Activated CD8-positive, alpha-beta T cell treated with anti-CD3 and anti-CD28 coated beads, Interleukin-2, amount 10 ng/mL, durations not matched to agents 7 days and 5 days (primary cell): ENCODE measurements at regions of chr12 and their contacts with region 1.

Region 1: GRCh38 chr12:92145731-92146496 is at the start of gene BTG1:
- DNase-seq: peak; percentile 99
- ATAC-seq: peak; percentile 73
- H3K4me3 Mint-ChIP-seq: peak within 1 kb of the TSS; percentile 100
- H3K27ac Mint-ChIP-seq: peak within 1 kb of the TSS; percentile 99
- H3K4me1 Mint-ChIP-seq: peaks cover 20% of the 10 kb centered on the region
- H3K27me3 Mint-ChIP-seq: no peaks in the 10 kb centered on the region
- total RNA-seq, gene BTG1: 113 to 118 TPM

Region 2: DNA sequence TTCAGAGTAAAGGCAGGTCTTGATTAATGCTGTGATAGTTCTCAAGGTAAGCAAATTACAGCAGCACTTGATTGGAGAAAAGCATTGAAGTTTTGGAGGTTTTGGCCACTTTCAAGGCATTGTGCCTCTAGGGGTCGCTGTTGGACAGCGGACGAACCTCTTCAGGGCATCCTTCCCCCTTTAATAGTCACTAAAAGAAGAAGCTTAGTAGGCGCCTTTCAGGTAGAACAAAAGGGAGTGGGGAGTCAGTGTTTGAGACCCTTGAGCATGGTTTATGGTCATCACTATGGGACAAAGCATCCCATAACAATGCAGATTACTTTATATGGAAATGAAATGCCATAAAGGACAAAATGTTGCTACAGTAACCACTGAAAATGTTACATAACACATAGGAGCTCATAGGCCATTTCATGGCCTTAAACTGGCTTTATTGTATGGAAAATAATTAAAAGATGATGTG is 763.8 kb before region 1 on chr12:
- CTCF ChIA-PET with region 1: interaction called, 20 read pairs
- POLR2A ChIA-PET with region 1: interaction called, 17 read pairs
- DNase-seq: peak; percentile 87
- ATAC-seq: peak; percentile 88
- H3K4me3 Mint-ChIP-seq: peak overlapping the region; percentile 66
- H3K27ac Mint-ChIP-seq: no peak overlapping the region
- H3K4me1 Mint-ChIP-seq: peaks cover 9% of the 10 kb centered on the region
- H3K27me3 Mint-ChIP-seq: peaks cover 10% of the 10 kb centered on the region

Region 3: GRCh38 chr12:92030618-92031017 is 115.3 kb before region 1 on chr12:
- CTCF ChIA-PET with region 1: interaction called, 7 read pairs
- POLR2A ChIA-PET with region 1: interaction called, 58 read pairs
- DNase-seq: peak; percentile 79
- ATAC-seq: peak; percentile 98
- H3K4me3 Mint-ChIP-seq: peak overlapping the region; percentile 72
- H3K27ac Mint-ChIP-seq: peak overlapping the region; percentile 89
- H3K4me1 Mint-ChIP-seq: peaks cover 74% of the 10 kb centered on the region
- H3K27me3 Mint-ChIP-seq: no peaks in the 10 kb centered on the region

Region 4: DNA sequence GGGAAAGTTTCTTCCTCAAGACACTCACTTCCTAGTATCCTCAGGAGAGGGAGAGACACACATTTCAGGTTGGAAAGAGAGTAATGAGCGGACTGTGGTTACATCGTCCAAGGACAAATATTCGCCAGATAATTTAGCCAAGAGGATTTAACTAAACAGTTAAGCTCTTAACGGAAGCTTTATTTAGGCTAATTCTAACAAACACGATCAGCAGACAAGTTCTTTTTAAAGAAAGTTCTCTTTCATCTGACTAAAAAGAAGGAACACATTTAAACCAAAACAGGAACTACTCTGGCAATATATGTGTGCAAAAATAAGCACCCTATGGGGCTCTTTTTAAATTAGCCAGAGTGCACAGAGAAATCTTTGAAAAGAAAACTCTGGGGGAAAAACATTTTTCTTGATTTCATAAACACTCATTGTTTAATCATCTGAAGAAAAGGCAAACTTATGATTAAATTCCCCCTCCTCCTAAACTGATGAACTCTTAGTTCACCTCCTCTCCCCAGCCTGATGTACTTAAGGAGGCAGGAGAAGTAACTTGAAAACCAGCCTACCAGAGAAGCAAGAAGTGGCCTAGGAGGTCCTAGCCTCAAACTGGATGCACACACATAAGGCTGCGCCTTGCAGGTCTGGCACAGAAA is 13.0 kb after region 1 on chr12:
- CTCF ChIA-PET with region 1: interaction called, 5 read pairs
- POLR2A ChIA-PET with region 1: interaction called, 25 read pairs
- DNase-seq: no peak
- ATAC-seq: peak; percentile 47
- H3K4me3 Mint-ChIP-seq: peak overlapping the region; percentile 15
- H3K27ac Mint-ChIP-seq: peak overlapping the region; percentile 57
- H3K4me1 Mint-ChIP-seq: peaks cover 35% of the 10 kb centered on the region
- H3K27me3 Mint-ChIP-seq: no peaks in the 10 kb centered on the region

Region 5: DNA sequence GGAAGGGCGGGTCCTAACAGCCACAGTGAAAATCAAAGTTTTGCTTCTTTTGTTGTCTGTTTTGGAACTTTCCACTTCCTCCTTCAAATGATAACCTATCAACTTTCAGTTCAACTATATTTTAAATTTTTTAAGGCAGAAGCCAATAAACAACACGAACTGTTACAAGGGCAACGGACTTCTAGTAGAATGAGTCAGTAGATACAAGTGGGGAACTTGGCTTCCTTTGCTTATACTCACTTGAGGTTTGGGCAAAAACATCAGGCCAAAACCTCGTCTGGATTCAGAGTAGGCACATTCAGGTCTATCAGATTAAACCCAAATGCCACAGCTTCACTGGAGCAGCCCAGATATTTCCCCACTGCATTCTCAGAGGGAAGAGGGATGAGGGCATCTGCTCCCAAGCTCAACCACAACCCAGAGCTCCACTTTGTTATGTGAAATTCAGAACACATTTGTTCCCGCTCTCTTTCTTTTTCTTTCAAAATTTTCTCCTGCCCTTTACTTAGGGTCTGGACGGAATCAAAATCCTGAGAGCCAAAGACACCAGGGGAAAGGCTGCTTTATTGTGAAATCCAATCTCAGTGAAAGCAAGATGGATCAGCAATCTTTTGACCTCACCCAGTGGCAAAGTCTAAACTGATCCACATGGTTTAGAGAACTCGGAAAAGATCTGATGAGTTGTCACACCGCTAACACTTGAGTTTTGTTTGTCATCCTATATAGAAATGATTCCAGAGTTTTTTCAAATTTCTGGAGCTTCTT is 152.2 kb after region 1 on chr12:
- CTCF ChIA-PET with region 1: interaction called, 3 read pairs
- POLR2A ChIA-PET with region 1: interaction called, 22 read pairs
- DNase-seq: peak; percentile 29
- ATAC-seq: peak; percentile 92
- H3K4me3 Mint-ChIP-seq: peak overlapping the region; percentile 6
- H3K27ac Mint-ChIP-seq: peak overlapping the region; percentile 83
- H3K4me1 Mint-ChIP-seq: no peaks in the 10 kb centered on the region
- H3K27me3 Mint-ChIP-seq: no peaks in the 10 kb centered on the region

Region 6: DNA sequence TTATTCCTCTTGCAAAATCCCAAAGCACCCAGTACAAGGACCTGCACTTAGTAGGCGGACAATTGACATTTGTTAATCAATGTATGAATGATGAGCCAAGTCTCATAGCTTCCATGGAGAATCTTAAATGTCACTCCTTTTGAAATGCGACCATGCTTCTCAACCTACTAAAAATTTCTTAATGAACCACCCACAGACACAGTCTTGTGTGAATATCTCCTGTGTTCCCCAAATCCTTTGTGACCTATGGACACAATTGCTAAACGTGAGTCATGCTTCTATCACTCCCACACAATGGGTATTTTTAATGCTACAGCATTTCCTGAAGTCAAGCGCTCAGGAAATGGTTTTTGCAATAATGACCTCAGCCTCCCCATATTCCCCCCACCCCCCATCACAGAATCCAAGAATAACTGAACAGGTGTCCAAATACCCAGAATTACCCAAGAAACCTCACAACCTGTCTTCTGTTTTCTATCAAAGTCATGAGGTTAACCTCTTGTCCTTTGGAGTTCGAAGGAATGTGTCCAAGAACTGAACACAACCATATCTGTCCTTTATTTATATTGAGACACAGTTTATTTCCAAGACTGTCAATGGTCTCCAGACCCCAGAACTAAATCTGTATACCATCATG is 393.3 kb after region 1 on chr12:
- CTCF ChIA-PET with region 1: no interaction called
- POLR2A ChIA-PET with region 1: interaction called, 10 read pairs
- DNase-seq: peak; percentile 53
- ATAC-seq: peak; percentile 45
- H3K4me3 Mint-ChIP-seq: peak overlapping the region; percentile 10
- H3K27ac Mint-ChIP-seq: peak overlapping the region; percentile 91
- H3K4me1 Mint-ChIP-seq: peaks cover 72% of the 10 kb centered on the region
- H3K27me3 Mint-ChIP-seq: no peaks in the 10 kb centered on the region